AG04450 (cell line): ENCODE measurements at regions of chr5 and their contacts with region 1.

Region 1: GRCh38 chr5:179623003-179623880 is at the start of gene HNRNPH1:
- DNase-seq: peak; percentile 98
- H3K4me3 ChIP-seq: peak within 1 kb of the TSS; percentile 100
- H3K27ac ChIP-seq: peak within 1 kb of the TSS; percentile 96
- H3K27me3 ChIP-seq: no peaks in the 10 kb centered on the region
- CTCF ChIP-seq: no peak
- polyA plus RNA-seq, gene HNRNPH1: 341 and 383 TPM in 2 replicates

Region 2: DNA sequence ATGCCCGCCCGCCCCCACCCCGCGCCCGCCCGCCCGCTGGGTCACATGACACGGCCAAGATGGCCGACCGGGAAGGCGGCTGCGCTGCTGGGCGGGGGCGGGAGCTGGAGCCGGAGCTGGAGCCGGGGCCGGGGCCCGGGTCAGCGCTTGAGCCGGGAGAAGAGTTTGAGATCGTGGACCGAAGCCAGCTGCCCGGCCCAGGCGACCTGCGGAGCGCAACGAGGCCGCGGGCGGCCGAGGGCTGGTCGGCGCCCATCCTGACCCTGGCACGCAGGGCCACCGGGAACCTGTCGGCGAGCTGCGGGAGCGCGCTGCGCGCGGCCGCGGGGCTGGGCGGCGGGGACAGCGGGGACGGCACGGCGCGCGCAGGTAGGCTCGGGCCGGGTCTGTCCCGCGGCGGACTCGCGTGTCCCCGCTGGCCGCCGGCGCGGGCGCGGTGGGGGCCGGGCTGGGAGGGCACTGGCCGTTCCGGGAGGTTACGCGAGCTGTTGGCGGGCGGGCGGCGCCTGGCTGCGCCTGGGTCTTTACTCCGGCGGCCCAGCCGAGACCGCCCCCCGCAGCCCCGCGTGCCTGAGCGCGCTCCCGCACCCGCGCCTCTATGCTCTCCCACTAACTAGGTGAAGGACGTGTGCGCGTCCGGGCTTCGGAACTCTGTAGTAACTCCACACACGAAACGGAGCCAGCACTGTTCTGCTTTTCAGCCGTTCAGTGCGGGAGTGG is 72.6 kb before region 1 on chr5 and contains the start of gene RUFY1:
- CTCF ChIA-PET with region 1: no interaction called
- POLR2A ChIA-PET with region 1: interaction called, 10 read pairs
- DNase-seq: peak; percentile 32
- H3K4me3 ChIP-seq: peak within 1 kb of the TSS; percentile 61
- H3K27ac ChIP-seq: peak within 1 kb of the TSS; percentile 91
- H3K27me3 ChIP-seq: no peaks in the 10 kb centered on the region
- CTCF ChIP-seq: no peak
- polyA plus RNA-seq, gene RUFY1: 24.1 and 31.1 TPM in 2 replicates

Region 3: DNA sequence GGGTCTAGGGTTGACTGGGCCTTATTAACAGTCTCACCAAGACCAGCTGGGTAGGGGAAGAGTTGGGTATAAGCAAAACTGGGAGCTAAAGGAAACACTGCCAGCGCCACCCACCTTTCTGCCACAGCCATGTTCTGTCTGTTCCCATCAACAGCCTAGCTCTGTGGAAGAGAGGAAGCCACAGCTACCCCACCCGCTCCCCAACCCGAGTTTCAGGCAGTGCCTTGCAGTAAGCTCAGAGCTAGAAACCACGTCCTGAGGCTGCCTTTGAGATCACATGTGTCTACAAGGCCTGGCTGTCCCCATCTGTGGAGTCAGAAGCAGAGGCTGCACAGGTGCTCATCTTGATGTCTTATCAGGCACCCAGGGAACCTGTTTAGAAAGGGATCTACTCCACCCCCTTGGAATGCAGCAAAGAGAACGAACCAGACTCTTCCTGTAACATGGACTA is 15.1 kb before region 1 on chr5:
- CTCF ChIA-PET with region 1: interaction called, 10 read pairs
- POLR2A ChIA-PET with region 1: interaction called, 51 read pairs
- DNase-seq: no peak
- H3K4me3 ChIP-seq: no peak overlapping the region
- H3K27ac ChIP-seq: peak overlapping the region; percentile 39
- H3K27me3 ChIP-seq: no peaks in the 10 kb centered on the region
- CTCF ChIP-seq: no peak

Region 4: GRCh38 chr5:179678223-179679013 is 55.2 kb after region 1 on chr5:
- CTCF ChIA-PET with region 1: no interaction called
- POLR2A ChIA-PET with region 1: interaction called, 14 read pairs
- DNase-seq: peak; percentile 86
- H3K4me3 ChIP-seq: peak overlapping the region; percentile 92
- H3K27ac ChIP-seq: peak overlapping the region; percentile 77
- H3K27me3 ChIP-seq: no peaks in the 10 kb centered on the region
- CTCF ChIP-seq: no peak

Region 5: DNA sequence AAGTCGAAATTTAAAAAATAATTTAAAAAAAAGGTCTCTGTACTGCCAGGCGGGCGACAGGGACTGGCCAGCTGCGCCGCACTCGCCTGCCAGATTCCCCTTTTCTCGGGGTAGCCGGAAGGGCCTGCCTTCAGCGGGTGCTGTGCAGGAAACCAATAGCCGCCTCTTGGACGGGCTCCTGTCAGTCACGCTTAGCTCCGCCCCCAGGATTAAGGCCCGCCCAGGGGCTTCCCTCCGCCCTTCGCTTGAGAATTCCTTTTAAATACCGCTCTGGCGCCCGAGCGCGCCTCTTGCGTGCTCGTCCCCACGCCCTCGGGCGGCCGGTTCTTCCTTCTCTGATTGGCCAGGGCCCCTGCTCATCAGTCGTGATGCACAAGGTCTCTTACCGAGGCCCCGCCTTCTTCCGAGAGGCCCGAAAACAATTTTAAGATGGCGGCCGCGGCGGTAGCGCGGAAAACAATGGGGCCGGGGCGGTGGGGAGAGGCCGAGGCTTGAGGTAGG is 109.2 kb after region 1 on chr5 and contains the start of gene MAML1:
- CTCF ChIA-PET with region 1: no interaction called
- POLR2A ChIA-PET with region 1: interaction called, 14 read pairs
- DNase-seq: peak; percentile 100
- H3K4me3 ChIP-seq: peak within 1 kb of the TSS; percentile 88
- H3K27ac ChIP-seq: peak within 1 kb of the TSS; percentile 83
- H3K27me3 ChIP-seq: no peaks in the 10 kb centered on the region
- CTCF ChIP-seq: no peak
- polyA plus RNA-seq, gene MAML1: 4.9 and 8.8 TPM in 2 replicates

Region 6: DNA sequence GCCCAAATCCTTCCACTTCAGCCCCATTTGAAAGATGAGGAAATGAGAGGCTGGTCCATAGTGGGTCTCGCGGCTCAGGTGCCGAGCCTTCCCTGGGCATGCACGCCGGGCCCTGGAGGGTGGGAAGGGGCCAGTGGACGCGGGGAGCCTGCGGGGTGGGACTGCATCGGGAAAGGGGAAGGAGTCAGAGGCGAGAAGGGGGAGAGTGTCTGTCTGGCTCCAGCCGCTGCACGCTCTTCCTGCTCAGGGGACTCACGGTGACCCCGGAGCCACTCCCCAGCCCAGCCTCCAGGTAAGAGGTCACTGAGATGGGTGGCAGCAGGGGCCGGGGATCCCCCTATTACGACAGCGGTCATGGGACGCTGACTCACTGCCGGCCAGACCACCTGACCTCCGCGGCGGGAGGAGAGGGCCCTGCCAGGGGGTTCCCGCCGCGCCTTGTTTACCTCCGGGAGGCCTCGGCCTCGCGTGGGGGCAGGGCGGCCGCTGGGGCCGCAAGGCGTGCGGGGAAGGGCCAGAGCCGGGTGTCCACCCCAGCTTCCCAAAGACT is 195.6 kb after region 1 on chr5:
- CTCF ChIA-PET with region 1: no interaction called
- POLR2A ChIA-PET with region 1: interaction called, 12 read pairs
- DNase-seq: peak; percentile 81
- H3K4me3 ChIP-seq: peak overlapping the region; percentile 44
- H3K27ac ChIP-seq: peak overlapping the region; percentile 99
- H3K27me3 ChIP-seq: no peaks in the 10 kb centered on the region
- CTCF ChIP-seq: no peak